PC-9 (cell line): ENCODE measurements at regions of chr1 and their contacts with region 1.

Region 1: DNA sequence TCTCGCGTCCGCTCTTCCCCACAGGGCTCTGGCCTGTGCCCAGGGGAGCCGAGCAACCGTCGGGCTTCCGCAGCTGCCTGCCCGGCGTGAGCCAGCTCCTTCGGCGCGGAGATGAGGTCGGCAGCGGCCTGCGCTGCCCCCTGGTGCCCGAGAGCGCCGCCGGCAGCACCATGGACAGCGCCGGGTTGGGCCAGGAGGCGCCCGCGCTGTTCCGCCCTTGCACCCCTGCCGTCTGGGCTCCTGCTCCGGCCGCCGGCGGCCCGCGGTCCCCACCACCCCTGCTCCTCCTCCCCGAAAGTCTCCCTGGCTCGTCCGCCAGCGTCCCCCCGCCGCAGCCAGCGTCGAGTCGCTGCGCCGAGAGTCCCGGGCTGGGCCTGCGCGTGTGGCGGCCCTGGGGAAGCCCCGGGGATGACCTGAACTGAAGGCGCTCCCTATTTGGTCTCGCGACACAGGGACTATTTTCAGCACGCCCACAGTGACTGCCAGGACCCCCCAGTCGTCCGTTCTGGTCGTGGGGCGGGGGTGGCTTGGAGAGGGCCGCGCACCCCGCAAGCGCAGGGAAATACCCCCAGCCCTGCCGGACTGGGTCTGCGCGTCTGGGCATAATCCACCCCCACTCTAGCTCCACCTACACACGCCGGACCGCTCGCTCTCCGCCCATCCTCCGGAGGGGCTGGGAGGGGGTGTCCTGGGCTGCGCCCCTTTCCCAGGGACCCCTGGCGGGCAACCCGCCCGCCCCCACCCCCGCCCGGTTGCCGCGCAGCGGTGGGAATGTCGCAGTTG is 1.3 kb downstream of the HES3 start:
- DNase-seq: peak; percentile 47 to 82
- H3K4me3 ChIP-seq: peak overlapping the region; percentile 42; the same call in 1 of the 2 replicates
- H3K27ac ChIP-seq: no peak overlapping the region
- H3K4me1 ChIP-seq: no peaks in the 10 kb centered on the region
- H3K27me3 ChIP-seq: peaks cover 17% of the 10 kb centered on the region
- CTCF ChIP-seq: peak; percentile 68

Region 2: DNA sequence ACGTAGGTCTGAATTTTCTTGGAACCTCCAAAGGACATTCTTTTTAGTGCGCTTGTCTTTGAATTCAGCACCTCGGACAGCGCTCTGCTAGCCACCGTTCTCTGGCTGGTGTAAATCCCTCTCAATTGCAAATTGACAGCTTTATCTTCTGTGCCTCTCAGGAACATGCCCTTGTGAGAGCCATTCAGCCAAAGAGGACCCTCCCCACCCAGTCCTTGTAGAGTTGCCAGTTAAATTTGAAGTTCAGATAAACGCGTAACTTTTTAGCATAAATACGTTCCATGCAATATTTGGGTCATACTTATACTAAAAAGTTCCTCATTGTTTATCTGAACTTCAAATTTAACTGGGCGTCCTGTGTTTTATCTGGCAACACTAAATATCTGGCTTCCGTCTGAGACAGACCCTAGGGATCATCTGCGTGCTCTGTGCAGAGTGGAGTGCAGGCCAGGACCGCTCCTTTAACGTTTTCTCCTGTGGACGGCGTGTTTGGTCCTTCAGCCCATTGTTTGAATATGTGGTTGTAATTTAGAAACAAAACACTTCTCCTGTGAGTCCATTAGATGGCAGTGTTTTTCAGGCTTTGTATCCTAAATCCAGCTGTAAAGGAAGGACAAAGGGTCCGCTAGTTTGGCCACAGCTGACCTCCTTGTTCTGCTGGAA is 192.6 kb before region 1 on chr1:
- CTCF ChIA-PET with region 1: interaction called, 10 read pairs
- POLR2A ChIA-PET with region 1: no interaction called
- intact Hi-C with region 1: loop called (anchors 1 kb)
- DNase-seq: peak in 1 of 2 experiments; percentile 46
- H3K4me3 ChIP-seq: no peak overlapping the region
- H3K27ac ChIP-seq: no peak overlapping the region
- H3K4me1 ChIP-seq: no peaks in the 10 kb centered on the region; the same call in 1 of the 2 replicates
- H3K27me3 ChIP-seq: no peaks in the 10 kb centered on the region
- CTCF ChIP-seq: peak; percentile 71

Region 3: GRCh38 chr1:6205849-6206519 is 39.3 kb before region 1 on chr1 and contains the start of gene RNF207:
- CTCF ChIA-PET with region 1: interaction called, 10 read pairs
- POLR2A ChIA-PET with region 1: interaction called, 10 read pairs
- intact Hi-C with region 1: no loop called
- DNase-seq: peak; percentile 73 to 86
- H3K4me3 ChIP-seq: peak within 1 kb of the TSS; percentile 94
- H3K27ac ChIP-seq: peak within 1 kb of the TSS; percentile 77
- H3K4me1 ChIP-seq: 0 out of 2 replicates have a peak, but pooled peaks cover 6% of the 10 kb centered on the region
- H3K27me3 ChIP-seq: no peaks in the 10 kb centered on the region
- CTCF ChIP-seq: no peak
- total RNA-seq, gene RNF207: 49.3 and 53.1 TPM in 2 replicates

Region 4: GRCh38 chr1:6401673-6402072 is 156.4 kb after region 1 on chr1:
- CTCF ChIA-PET with region 1: interaction called, 6 read pairs
- POLR2A ChIA-PET with region 1: no interaction called
- intact Hi-C with region 1: loop called (anchors 2 kb)
- DNase-seq: peak in 1 of 2 experiments; percentile 65
- H3K4me3 ChIP-seq: no peak overlapping the region
- H3K27ac ChIP-seq: no peak overlapping the region
- H3K4me1 ChIP-seq: peaks cover 8% of the 10 kb centered on the region; the same call in 1 of the 2 replicates
- H3K27me3 ChIP-seq: no peaks in the 10 kb centered on the region
- CTCF ChIP-seq: no peak

Region 5: GRCh38 chr1:6489799-6490180 is 244.5 kb after region 1 on chr1:
- CTCF ChIA-PET with region 1: interaction called, 3 read pairs
- POLR2A ChIA-PET with region 1: no interaction called
- intact Hi-C with region 1: loop called (anchors 5 kb)
- DNase-seq: peak in 1 of 2 experiments; percentile 79
- H3K4me3 ChIP-seq: peak overlapping the region; percentile 89
- H3K27ac ChIP-seq: peak overlapping the region; percentile 89; the same call in 1 of the 2 replicates
- H3K4me1 ChIP-seq: peaks cover 19% of the 10 kb centered on the region
- H3K27me3 ChIP-seq: no peaks in the 10 kb centered on the region
- CTCF ChIP-seq: peak; percentile 91

Region 6: DNA sequence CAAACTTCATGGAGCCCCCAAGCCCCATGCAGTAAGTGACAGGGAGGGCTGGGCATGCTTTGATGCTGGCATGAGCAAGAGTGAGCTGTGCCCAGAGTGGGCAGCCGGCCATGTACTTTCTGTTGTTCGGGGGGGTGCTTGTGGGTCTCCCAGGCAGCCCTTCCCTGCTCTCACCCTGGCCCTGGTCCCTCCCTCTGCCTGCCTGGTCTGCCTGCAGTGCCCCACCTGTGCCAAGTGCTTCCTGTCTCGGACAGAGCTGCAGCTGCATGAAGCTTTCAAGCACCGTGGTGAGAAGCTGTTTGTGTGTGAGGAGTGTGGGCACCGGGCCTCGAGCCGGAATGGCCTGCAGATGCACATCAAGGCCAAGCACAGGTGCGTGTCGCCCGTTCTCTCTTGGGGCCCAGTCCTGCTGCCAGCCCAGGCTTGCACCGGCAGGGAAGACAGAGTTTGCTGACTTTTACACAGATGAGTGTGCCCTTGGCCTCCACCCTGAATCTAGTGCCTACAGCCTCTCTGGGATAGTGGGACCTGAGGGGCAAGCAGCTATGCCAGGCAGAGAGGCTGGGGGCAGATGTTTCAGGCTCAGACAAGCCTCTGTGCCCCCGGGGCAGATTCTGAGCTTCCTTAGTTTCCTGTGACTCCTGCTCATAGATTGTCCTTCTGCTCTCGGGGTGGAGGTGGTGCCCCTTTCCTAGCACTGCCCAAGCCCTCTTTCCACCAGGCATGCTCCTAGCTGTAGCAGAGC is 342.2 kb after region 1 on chr1:
- CTCF ChIA-PET with region 1: no interaction called
- POLR2A ChIA-PET with region 1: no interaction called
- intact Hi-C with region 1: no loop called
- DNase-seq: no peak
- H3K4me3 ChIP-seq: no peak overlapping the region
- H3K27ac ChIP-seq: no peak overlapping the region
- H3K4me1 ChIP-seq: no peaks in the 10 kb centered on the region
- H3K27me3 ChIP-seq: no peaks in the 10 kb centered on the region
- CTCF ChIP-seq: no peak

Region 7: GRCh38 chr1:7218210-7218832 is 973.0 kb after region 1 on chr1:
- CTCF ChIA-PET with region 1: no interaction called
- POLR2A ChIA-PET with region 1: no interaction called
- intact Hi-C with region 1: loop called (anchors 2 kb)
- DNase-seq: peak; percentile 28 to 36
- H3K4me3 ChIP-seq: no peak overlapping the region
- H3K27ac ChIP-seq: no peak overlapping the region
- H3K4me1 ChIP-seq: no peaks in the 10 kb centered on the region
- H3K27me3 ChIP-seq: peaks cover 22% of the 10 kb centered on the region
- CTCF ChIP-seq: peak; percentile 81